Activated T-helper 1 cell treated with anti-CD3 and anti-CD28 coated beads, Interleukin-12 subunit alpha, Interleukin-12 subunit beta, Interleukin-2, Interleukin-4 antibody, amounts not matched to agents 30 ng/mL and 10 ng/mL and 1 ng/mL, durations not matched to agents 14 hours and 24 hours and 36 hours (primary cell): ENCODE measurements at regions of chr5 and their contacts with region 1.

Region 1: DNA sequence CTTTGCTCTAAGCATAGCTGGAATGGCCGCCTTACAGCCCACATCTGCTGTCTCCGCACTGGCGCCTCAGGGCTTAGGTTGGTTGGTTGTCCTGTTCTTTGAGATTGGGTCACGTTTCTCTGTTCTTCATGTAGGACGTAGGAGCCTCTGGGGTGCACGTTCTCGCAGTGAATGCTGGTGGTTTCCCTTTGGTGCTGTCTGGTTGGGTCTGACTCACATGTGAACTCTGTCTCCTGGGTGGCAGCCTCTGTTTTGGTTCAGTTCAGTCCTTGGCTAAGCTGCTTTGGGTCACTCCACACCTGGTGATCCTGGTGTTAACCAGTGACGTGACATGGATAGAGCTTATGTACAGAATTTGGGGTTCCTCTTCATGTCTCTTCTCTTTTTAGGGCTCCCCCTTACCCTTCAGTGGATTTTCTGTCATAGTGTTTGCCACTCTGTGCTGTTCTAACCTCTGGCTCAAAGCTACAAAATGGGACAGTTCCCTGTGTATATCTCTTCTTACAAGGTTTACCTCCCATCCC is 12.6 kb upstream of the LPCAT1 start:
- DNase-seq: peak; percentile 50
- H3K4me3 Mint-ChIP-seq: peak overlapping the region; percentile 71
- H3K27ac Mint-ChIP-seq: peak overlapping the region; percentile 79
- H3K4me1 Mint-ChIP-seq: peaks cover 20% of the 10 kb centered on the region
- H3K27me3 Mint-ChIP-seq: peaks cover 25% of the 10 kb centered on the region

Region 2: GRCh38 chr5:657570-657969 is 878.8 kb before region 1 on chr5:
- intact Hi-C with region 1: loop called (anchors 10 kb)
- DNase-seq: no peak
- H3K4me3 Mint-ChIP-seq: no peak overlapping the region
- H3K27ac Mint-ChIP-seq: no peak overlapping the region
- H3K4me1 Mint-ChIP-seq: no peaks in the 10 kb centered on the region
- H3K27me3 Mint-ChIP-seq: no peaks in the 10 kb centered on the region

Region 3: GRCh38 chr5:1161833-1162229 is 374.6 kb before region 1 on chr5:
- intact Hi-C with region 1: no loop called
- DNase-seq: no peak
- H3K4me3 Mint-ChIP-seq: no peak overlapping the region
- H3K27ac Mint-ChIP-seq: no peak overlapping the region
- H3K4me1 Mint-ChIP-seq: no peaks in the 10 kb centered on the region
- H3K27me3 Mint-ChIP-seq: peaks cover 17% of the 10 kb centered on the region

Region 4: GRCh38 chr5:1594357-1595106 is 58.1 kb after region 1 on chr5:
- intact Hi-C with region 1: loop called (anchors 5 kb)
- DNase-seq: peak; percentile 39
- H3K4me3 Mint-ChIP-seq: peak overlapping the region; percentile 60
- H3K27ac Mint-ChIP-seq: no peak overlapping the region
- H3K4me1 Mint-ChIP-seq: peaks cover 7% of the 10 kb centered on the region
- H3K27me3 Mint-ChIP-seq: no peaks in the 10 kb centered on the region